GM10248 (cell line): ENCODE measurements at regions of chr12 and their contacts with region 1.

Region 1: GRCh38 chr12:116708826-116709756 is 28.8 kb downstream of the SPRING1 start:
- DNase-seq: peak; percentile 38
- CTCF ChIP-seq: peak; percentile 79

Region 2: GRCh38 chr12:115998119-115998633 is 710.9 kb before region 1 on chr12:
- CTCF ChIA-PET with region 1: interaction called, 14 read pairs
- POLR2A ChIA-PET with region 1: no interaction called
- DNase-seq: peak; percentile 37
- CTCF ChIP-seq: peak; percentile 54

Region 3: GRCh38 chr12:116687888-116688287 is 21.2 kb before region 1 on chr12:
- CTCF ChIA-PET with region 1: interaction called, 18 read pairs
- POLR2A ChIA-PET with region 1: no interaction called
- DNase-seq: peak; percentile 46
- CTCF ChIP-seq: peak; percentile 25

Region 4: GRCh38 chr12:116697305-116697704 is 11.8 kb before region 1 on chr12:
- CTCF ChIA-PET with region 1: interaction called, 38 read pairs
- POLR2A ChIA-PET with region 1: no interaction called
- DNase-seq: peak; percentile 57
- CTCF ChIP-seq: peak; percentile 55

Region 5: GRCh38 chr12:116726694-116727093 is 17.6 kb after region 1 on chr12:
- CTCF ChIA-PET with region 1: interaction called, 13 read pairs
- POLR2A ChIA-PET with region 1: no interaction called
- DNase-seq: no peak
- CTCF ChIP-seq: no peak

Region 6: GRCh38 chr12:116731801-116732200 is 22.7 kb after region 1 on chr12:
- CTCF ChIA-PET with region 1: interaction called, 13 read pairs
- POLR2A ChIA-PET with region 1: no interaction called
- DNase-seq: no peak
- CTCF ChIP-seq: no peak